WTC11 (cell line): ENCODE measurements at regions of chr11 and their contacts with region 1.

Region 1: GRCh38 chr11:12963792-12964536 is 45.2 kb upstream of the RASSF10 start:
- DNase-seq: peak; percentile 88
- ATAC-seq: peak; percentile 98
- H3K4me3 Mint-ChIP-seq: no peak overlapping the region
- H3K27ac Mint-ChIP-seq: no peak overlapping the region
- H3K4me1 Mint-ChIP-seq: peaks cover 11% of the 10 kb centered on the region; the same call in 1 of the 2 replicates
- H3K27me3 Mint-ChIP-seq: peaks cover 8% of the 10 kb centered on the region
- CTCF ChIP-seq: peak; percentile 78

Region 2: DNA sequence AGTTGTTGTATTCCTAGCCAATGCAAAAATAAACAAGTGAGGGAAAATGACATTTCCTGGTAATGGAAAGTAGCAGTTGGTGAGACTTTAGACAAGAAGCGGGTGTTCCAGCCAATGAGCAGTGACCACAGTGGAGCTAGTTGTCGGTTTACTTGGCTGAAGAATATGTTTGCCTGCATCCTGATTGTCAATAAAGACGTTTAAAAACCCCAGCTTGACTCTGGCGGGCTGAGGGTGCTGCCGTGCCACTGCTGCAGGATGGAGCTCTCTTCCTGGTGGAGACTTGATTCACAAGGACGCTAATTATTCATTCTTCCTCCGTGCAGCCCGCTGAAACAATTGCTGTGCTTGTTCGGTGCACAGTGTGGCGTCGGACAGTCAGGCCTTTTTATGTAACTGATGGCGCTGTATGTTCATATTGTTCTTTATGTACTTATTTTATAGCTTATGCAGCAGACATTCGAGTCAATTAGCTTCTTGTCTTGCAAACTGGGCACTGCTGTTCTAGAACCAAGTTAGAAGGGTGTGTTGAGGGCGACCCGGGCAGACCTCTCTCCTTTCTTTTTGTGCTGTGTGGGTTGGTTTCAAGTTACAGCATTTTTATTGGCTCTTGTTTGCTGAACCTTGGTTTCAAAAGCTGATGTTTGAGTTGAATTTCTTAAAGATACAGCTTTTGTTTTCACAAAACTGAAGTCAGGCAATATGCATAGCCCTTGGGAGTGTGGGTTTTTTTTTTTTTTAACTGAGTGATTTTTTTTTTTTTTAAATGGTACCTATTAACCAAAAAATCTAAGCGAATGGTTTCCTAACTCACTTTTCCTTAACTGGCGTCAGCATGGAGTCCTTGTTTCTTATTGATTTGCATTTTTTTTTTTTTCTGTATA is 135.8 kb before region 1 on chr11:
- CTCF ChIA-PET with region 1: no interaction called
- POLR2A ChIA-PET with region 1: no interaction called
- DNase-seq: no peak
- ATAC-seq: peak; percentile 80
- H3K4me3 Mint-ChIP-seq: peak overlapping the region; percentile 79
- H3K27ac Mint-ChIP-seq: peak overlapping the region; percentile 99
- H3K4me1 Mint-ChIP-seq: peaks cover 89% of the 10 kb centered on the region
- H3K27me3 Mint-ChIP-seq: no peaks in the 10 kb centered on the region
- CTCF ChIP-seq: no peak

Region 3: DNA sequence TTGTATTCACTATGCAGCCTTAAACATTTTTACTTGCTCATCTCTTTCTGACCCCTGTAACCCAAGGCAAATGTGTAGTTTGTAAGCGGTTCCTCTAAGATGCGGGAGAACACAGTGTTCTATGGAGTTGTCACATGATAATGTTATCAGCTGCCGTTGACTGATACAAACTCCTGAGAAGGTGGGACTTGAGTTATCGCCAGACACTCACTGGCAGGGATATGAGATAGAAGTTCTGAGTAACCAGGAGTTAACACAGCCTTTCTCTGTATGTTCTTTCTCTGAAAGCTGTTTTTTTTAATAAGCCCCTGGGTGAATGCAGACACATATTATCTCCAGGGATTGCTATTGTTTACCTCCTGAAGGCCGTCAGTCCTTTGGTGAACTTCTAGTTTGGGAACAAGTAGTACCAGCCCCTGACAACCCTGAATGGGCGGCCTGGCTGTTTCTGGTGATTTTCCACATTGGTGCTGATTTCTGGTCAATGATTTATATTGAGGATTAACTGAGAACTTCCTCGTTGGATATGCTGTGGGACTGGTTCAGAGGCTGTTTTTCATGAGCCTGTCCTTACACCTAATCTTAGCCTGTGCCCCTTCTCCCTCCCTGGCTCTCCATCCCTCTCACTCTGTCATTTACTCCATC is 110.2 kb before region 1 on chr11:
- CTCF ChIA-PET with region 1: no interaction called
- POLR2A ChIA-PET with region 1: no interaction called
- DNase-seq: no peak
- ATAC-seq: no peak
- H3K4me3 Mint-ChIP-seq: no peak overlapping the region
- H3K27ac Mint-ChIP-seq: no peak overlapping the region
- H3K4me1 Mint-ChIP-seq: peaks cover 34% of the 10 kb centered on the region
- H3K27me3 Mint-ChIP-seq: no peaks in the 10 kb centered on the region
- CTCF ChIP-seq: no peak

Region 4: GRCh38 chr11:13008625-13009475 is 44.9 kb after region 1 on chr11 and contains the start of gene RASSF10:
- CTCF ChIA-PET with region 1: interaction called, 39 read pairs
- POLR2A ChIA-PET with region 1: no interaction called
- DNase-seq: peak; percentile 95
- ATAC-seq: peak; percentile 87
- H3K4me3 Mint-ChIP-seq: peak within 1 kb of the TSS; percentile 81
- H3K27ac Mint-ChIP-seq: peak within 1 kb of the TSS; percentile 96
- H3K4me1 Mint-ChIP-seq: peaks cover 55% of the 10 kb centered on the region
- H3K27me3 Mint-ChIP-seq: peaks cover 63% of the 10 kb centered on the region
- CTCF ChIP-seq: no peak
- total RNA-seq, gene RASSF10: 2.6 to 3.2 TPM (median 2.9 TPM) in 3 replicates

Region 5: GRCh38 chr11:13135385-13136271 is 171.7 kb after region 1 on chr11:
- CTCF ChIA-PET with region 1: interaction called, 24 read pairs
- POLR2A ChIA-PET with region 1: no interaction called
- DNase-seq: no peak
- ATAC-seq: peak; percentile 79
- H3K4me3 Mint-ChIP-seq: no peak overlapping the region
- H3K27ac Mint-ChIP-seq: no peak overlapping the region; the same call in 1 of the 2 replicates
- H3K4me1 Mint-ChIP-seq: peaks cover 22% of the 10 kb centered on the region
- H3K27me3 Mint-ChIP-seq: no peaks in the 10 kb centered on the region; the same call in 1 of the 2 replicates
- CTCF ChIP-seq: no peak

Region 6: DNA sequence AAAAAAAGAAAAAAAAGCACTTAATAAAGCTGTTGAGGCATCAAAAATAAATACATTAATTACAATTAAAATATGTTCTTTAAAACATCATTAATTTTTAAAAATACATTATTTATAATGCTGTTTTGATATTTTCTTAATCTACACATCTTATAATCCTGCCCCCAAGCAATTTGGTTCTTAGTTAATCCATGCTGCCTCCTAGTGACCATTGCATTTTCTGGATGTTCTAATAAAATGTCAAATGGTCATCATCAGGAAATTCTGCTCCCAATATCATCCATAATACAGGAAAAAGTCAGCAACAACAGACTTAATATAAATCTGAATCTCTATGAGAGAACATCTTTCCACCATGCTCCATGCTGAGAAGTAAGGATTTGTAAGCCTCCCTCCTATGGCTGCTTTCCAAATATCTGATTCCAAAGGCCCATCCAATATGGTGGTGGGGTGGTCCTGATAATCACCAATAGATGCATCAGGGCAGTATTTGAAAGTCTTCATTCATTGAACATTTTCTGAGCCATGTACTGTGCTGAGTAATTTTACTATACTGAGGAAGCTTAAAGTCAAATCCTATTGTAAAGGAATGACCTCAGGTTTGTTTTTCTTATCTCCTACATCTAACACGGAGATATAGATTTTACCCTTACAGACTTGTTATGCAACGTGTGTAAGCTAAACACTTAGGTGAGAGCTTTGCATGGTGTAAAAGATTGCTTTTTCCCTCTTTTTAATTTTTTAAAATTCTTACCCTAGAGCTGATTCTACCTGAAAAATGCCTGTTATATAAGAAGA is 189.0 kb after region 1 on chr11:
- CTCF ChIA-PET with region 1: interaction called, 42 read pairs
- POLR2A ChIA-PET with region 1: no interaction called
- DNase-seq: no peak
- ATAC-seq: no peak
- H3K4me3 Mint-ChIP-seq: no peak overlapping the region
- H3K27ac Mint-ChIP-seq: no peak overlapping the region
- H3K4me1 Mint-ChIP-seq: no peaks in the 10 kb centered on the region
- H3K27me3 Mint-ChIP-seq: no peaks in the 10 kb centered on the region
- CTCF ChIP-seq: no peak

Region 7: DNA sequence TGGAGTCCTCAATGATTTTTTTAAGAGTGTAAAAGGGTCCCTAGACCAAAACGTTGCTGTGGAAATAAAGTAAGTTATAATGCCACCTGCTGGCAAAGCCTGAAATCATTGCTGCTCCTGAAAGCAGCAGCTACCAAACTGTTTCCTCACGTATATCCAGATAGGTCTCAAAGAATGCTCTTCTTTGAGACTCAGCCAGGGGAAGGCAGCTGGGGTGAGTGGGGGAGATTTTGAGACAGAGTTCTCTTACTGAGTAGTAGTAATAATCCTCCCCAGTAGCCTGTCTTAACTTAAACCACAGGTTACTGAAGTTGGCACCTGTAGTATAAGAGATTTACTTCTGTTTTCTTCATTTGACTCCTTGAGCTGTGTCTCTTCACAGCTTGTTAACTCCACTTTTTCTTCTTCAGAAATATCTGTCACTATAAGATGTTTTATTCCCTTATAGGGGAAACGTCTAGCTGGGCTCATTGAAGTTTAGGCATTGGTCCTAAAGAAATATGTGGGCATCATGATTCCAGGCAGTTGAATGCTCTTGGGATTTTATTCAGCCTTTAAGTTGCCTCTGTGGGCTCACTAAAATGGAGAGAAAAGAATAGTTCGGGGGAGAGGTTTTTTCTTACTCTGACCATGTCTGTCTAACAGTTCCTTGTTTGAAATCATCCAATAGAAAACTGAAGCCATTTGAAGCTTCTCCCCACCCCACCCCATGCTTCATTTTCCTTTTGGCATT is 421.1 kb after region 1 on chr11:
- CTCF ChIA-PET with region 1: interaction called, 10 read pairs
- POLR2A ChIA-PET with region 1: no interaction called
- DNase-seq: peak; percentile 38
- ATAC-seq: peak; percentile 82
- H3K4me3 Mint-ChIP-seq: no peak overlapping the region
- H3K27ac Mint-ChIP-seq: no peak overlapping the region
- H3K4me1 Mint-ChIP-seq: no peaks in the 10 kb centered on the region
- H3K27me3 Mint-ChIP-seq: no peaks in the 10 kb centered on the region
- CTCF ChIP-seq: no peak